Left ventricle myocardium superior (tissue), 1 donor: ENCODE measurements at regions of chr3 and their contacts with region 1.

Region 1: GRCh38 chr3:17841190-17841828 is 98.9 kb upstream of the TBC1D5 start:
- DNase-seq: peak; percentile 81
- ATAC-seq: peak; percentile 86

Region 2: DNA sequence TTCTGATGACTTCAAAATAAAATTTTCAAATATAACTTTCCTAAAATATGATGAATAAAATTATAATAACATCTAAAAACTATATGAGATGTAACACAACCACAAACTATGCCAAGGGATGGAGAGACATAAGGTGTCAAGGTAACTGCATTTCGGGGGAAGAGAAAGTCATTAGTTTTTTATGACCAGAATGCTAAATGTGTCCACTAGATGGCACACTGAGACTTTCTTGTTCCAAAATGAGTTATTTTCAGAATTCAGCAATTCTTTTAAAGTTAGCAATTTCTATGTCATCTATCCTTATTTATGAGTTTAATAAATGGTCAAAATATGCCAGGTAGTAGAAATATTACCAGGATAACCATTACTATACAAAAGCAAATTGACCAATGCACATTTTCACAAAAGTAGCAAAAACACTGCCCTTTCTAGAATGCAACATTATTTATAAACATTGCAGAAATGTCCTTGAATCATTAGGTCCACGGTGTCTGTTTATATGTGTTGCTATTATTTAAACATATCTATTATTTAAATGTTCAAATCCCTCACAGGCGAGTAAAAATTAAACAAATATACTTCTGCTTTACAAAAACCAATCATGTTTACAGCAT is 582.4 kb before region 1 on chr3:
- intact Hi-C with region 1: loop called (anchors 10 kb)
- DNase-seq: no peak
- ATAC-seq: no peak

Region 3: DNA sequence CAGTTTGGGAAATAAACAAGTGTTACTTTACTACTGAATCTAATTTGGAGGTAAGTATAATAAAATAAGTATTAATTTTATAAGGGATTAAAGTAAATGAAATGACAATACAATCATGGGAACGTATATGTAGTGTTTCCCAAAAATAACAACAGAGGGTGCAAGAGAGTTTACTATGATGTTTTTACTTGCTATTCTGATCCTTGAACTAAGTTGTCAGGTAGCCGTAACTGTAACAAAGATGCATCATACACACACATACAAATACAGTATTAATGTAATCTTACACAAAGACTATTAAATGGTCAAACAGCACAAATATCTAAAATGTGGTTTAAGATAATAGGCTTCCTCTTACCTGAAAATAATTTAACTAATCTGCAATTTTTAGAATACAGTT is 410.3 kb before region 1 on chr3:
- intact Hi-C with region 1: loop called (anchors 5 kb)
- DNase-seq: no peak
- ATAC-seq: peak; percentile 56